ENCODE measurements at regions of chr15 and their contacts with region 1.

Region 1: GRCh38 chr15:38474155-38474757 is 20.3 kb downstream of the FAM98B start:
- H3K4me3 Mint-ChIP-seq: no peak overlapping the region
- H3K27ac Mint-ChIP-seq: no peak overlapping the region
- H3K4me1 Mint-ChIP-seq: peaks cover 2% of the 10 kb centered on the region
- H3K27me3 Mint-ChIP-seq: no peaks in the 10 kb centered on the region

Region 2: GRCh38 chr15:38324939-38325647 is 149.2 kb before region 1 on chr15:
- intact Hi-C with region 1: no loop called
- H3K4me3 Mint-ChIP-seq: no peak overlapping the region
- H3K27ac Mint-ChIP-seq: no peak overlapping the region
- H3K4me1 Mint-ChIP-seq: peaks cover 15% of the 10 kb centered on the region
- H3K27me3 Mint-ChIP-seq: no peaks in the 10 kb centered on the region

Region 3: GRCh38 chr15:38514601-38515000 is 40.3 kb after region 1 on chr15:
- intact Hi-C with region 1: no loop called
- H3K4me3 Mint-ChIP-seq: no peak overlapping the region
- H3K27ac Mint-ChIP-seq: no peak overlapping the region
- H3K4me1 Mint-ChIP-seq: no peaks in the 10 kb centered on the region
- H3K27me3 Mint-ChIP-seq: peaks cover 4% of the 10 kb centered on the region

Region 4: DNA sequence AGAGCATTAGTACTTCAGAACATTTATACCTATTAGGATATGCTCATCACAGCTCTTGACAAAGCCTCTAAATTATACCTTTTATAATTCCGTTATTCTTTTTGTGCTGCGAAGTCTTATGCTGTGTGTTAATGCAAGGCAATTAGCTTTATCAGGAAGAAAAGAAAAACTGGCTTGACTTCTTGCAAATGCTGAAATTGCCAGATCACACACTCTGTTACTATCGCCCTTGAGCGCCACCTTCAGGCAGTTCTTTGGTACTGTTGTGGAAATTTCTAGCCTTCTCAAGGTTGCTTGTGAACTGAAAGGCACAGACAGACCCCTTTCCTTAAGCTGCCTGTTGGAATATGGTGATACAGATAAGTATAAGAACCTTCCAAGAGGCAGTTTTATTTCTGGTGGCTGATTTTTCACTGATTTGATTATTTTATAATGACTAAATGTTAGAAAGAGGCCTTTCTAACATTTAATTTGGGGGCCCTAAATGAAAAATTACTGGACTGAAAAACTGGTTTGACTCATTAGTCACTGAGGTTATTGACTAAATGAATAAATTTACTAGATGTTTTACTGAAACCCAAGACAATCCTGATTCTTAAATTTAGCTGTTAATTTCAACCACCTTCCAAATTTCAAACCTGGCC is 216.6 kb after region 1 on chr15:
- intact Hi-C with region 1: loop called (anchors 2 kb)
- H3K4me3 Mint-ChIP-seq: no peak overlapping the region
- H3K27ac Mint-ChIP-seq: no peak overlapping the region
- H3K4me1 Mint-ChIP-seq: peaks cover 16% of the 10 kb centered on the region
- H3K27me3 Mint-ChIP-seq: no peaks in the 10 kb centered on the region

Region 5: GRCh38 chr15:38699633-38700230 is 225.5 kb after region 1 on chr15:
- intact Hi-C with region 1: loop called (anchors 1 kb)
- H3K4me3 Mint-ChIP-seq: no peak overlapping the region
- H3K27ac Mint-ChIP-seq: no peak overlapping the region
- H3K4me1 Mint-ChIP-seq: no peaks in the 10 kb centered on the region
- H3K27me3 Mint-ChIP-seq: no peaks in the 10 kb centered on the region

Measured in dendritic cell treated with granulocyte-macrophage colony-stimulating factor and Interleukin-4, amounts not matched to agents 40 ng/mL and 50 ng/mL, for 4 days (primary cell).